ENCODE measurements at regions of chr15 and their contacts with region 1.

Region 1: DNA sequence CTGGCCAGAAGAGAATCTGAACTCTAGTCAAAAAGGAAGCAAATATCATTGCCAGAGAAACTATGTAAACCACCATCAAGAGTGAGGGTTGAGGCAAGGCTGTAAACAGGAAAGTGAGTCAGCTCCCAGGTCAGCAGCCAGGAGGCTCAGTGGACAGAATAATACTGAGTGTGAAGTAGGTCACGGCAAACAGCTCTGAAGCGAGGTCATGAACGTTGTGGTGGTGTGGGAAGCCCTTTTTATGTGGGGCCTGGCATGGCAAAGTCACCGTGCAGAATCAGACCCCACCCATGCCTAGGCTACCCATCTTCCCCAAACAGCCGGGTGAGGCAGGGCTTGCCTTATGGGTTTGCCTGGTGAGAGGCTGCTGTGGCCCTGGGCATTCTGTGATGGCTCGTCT is 43.9 kb downstream of the THBS1 start:
- DNase-seq: peak; percentile 92
- ATAC-seq: peak; percentile 83
- H3K4me3 Mint-ChIP-seq: peak overlapping the region; percentile 62
- H3K27ac Mint-ChIP-seq: peak overlapping the region; percentile 100
- H3K4me1 Mint-ChIP-seq: peaks cover 80% of the 10 kb centered on the region
- H3K27me3 Mint-ChIP-seq: no peaks in the 10 kb centered on the region

Region 2: GRCh38 chr15:39594056-39594763 is 30.6 kb before region 1 on chr15:
- CTCF ChIA-PET with region 1: interaction called, 10 read pairs
- DNase-seq: peak; percentile 58
- ATAC-seq: peak; percentile 60
- H3K4me3 Mint-ChIP-seq: no peak overlapping the region
- H3K27ac Mint-ChIP-seq: no peak overlapping the region
- H3K4me1 Mint-ChIP-seq: peaks cover 8% of the 10 kb centered on the region
- H3K27me3 Mint-ChIP-seq: peaks cover 7% of the 10 kb centered on the region

Region 3: GRCh38 chr15:39609166-39609916 is 15.5 kb before region 1 on chr15:
- CTCF ChIA-PET with region 1: interaction called, 11 read pairs
- DNase-seq: no peak
- ATAC-seq: no peak
- H3K4me3 Mint-ChIP-seq: no peak overlapping the region
- H3K27ac Mint-ChIP-seq: peak overlapping the region; percentile 67
- H3K4me1 Mint-ChIP-seq: peaks cover 16% of the 10 kb centered on the region
- H3K27me3 Mint-ChIP-seq: no peaks in the 10 kb centered on the region

Region 4: GRCh38 chr15:39642011-39642640 is 17.3 kb after region 1 on chr15:
- CTCF ChIA-PET with region 1: interaction called, 16 read pairs
- DNase-seq: no peak
- ATAC-seq: no peak
- H3K4me3 Mint-ChIP-seq: no peak overlapping the region
- H3K27ac Mint-ChIP-seq: no peak overlapping the region
- H3K4me1 Mint-ChIP-seq: peaks cover 47% of the 10 kb centered on the region
- H3K27me3 Mint-ChIP-seq: peaks cover 15% of the 10 kb centered on the region

Measured in activated CD8-positive, alpha-beta memory T cell treated with anti-CD3 and anti-CD28 coated beads, Interleukin-2, amount 10 ng/mL, durations not matched to agents 7 days and 5 days (primary cell).